ENCODE measurements at regions of chr20 and their contacts with region 1.

Region 1: GRCh38 chr20:14055127-14055742 is 59.9 kb downstream of the MACROD2 start:
- DNase-seq: peak; percentile 9 to 59 (median 14)
- ATAC-seq: no peak
- H3K4me3 ChIP-seq: no peak overlapping the region
- H3K27ac ChIP-seq: no peak overlapping the region
- H3K4me1 ChIP-seq: no peaks in the 10 kb centered on the region
- H3K27me3 ChIP-seq: no peaks in the 10 kb centered on the region
- CTCF ChIP-seq: peak; percentile 22 to 62 (median 32); a peak in 3 of 6 replicates
- EP300 ChIP-seq: no peak
- POLR2A ChIP-seq: no peak
- RAD21 ChIP-seq: peak; percentile 54 to 70

Region 2: GRCh38 chr20:13119583-13119982 is 935.7 kb before region 1 on chr20:
- CTCF ChIA-PET with region 1: interaction called, 4 read pairs
- POLR2A ChIA-PET with region 1: no interaction called
- in situ Hi-C with region 1: no loop called
- intact Hi-C with region 1: loop called (anchors 10 kb)
- DNase-seq: peak; percentile 13 to 44 (median 38)
- ATAC-seq: peak; percentile 86
- H3K4me3 ChIP-seq: no peak overlapping the region
- H3K27ac ChIP-seq: no peak overlapping the region
- H3K4me1 ChIP-seq: no peaks in the 10 kb centered on the region
- H3K27me3 ChIP-seq: no peaks in the 10 kb centered on the region
- CTCF ChIP-seq: peak; percentile 45 to 63 (median 54); a peak in 5 of 6 replicates
- EP300 ChIP-seq: no peak
- POLR2A ChIP-seq: no peak
- RAD21 ChIP-seq: peak; percentile 47 to 67

Region 3: DNA sequence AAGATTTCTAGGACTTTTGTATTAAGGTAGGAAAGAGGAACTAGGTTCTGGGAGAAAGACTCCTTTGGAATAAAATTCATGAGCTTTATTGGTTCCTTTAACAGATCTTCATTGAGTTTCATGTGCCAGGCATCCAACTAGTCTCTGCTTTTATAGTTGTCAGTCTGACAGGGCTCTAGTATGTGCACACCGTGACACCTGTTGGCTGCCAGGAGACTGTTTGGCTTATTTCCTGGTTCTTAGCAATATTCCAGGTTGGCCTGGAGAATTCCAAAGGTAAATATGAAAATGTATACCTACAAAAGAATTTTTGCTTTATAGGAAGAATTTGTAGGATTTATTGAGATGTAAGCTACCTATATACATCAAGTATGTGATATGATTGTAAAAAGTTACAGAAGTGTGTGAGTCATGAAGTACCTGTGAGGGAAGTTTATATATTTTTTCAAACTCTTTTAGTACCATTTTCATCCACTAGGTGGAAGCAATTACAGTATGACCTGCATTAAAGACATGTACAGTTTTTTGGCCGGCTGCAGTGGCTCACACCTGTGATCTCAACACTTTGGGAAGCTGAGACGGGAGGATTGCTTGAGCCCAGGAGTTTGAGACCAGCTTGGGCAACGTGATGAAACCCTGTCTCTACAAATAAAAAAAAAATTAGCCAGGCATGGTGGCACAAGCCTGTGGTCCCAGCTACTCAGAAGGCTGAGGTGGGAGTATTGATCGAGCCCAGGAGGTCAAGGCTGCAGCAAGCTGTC is 235.2 kb before region 1 on chr20:
- CTCF ChIA-PET with region 1: interaction called, 6 read pairs
- POLR2A ChIA-PET with region 1: no interaction called
- in situ Hi-C with region 1: no loop called
- intact Hi-C with region 1: loop called (anchors 1 kb)
- DNase-seq: peak; percentile 32 to 47 (median 36)
- ATAC-seq: peak; percentile 88
- H3K4me3 ChIP-seq: no peak overlapping the region
- H3K27ac ChIP-seq: no peak overlapping the region
- H3K4me1 ChIP-seq: no peaks in the 10 kb centered on the region; a peak in 1 of 5 replicates
- H3K27me3 ChIP-seq: no peaks in the 10 kb centered on the region; a peak in 1 of 5 replicates
- CTCF ChIP-seq: peak in 2 of 3 experiments; percentile 31 to 53; a peak in 4 of 6 replicates
- EP300 ChIP-seq: no peak
- POLR2A ChIP-seq: no peak
- RAD21 ChIP-seq: peak; percentile 29 to 51; a peak in 3 of 4 replicates

Region 4: GRCh38 chr20:13898011-13898612 is 157.1 kb before region 1 on chr20:
- CTCF ChIA-PET with region 1: interaction called, 4 read pairs
- POLR2A ChIA-PET with region 1: no interaction called
- in situ Hi-C with region 1: no loop called
- intact Hi-C with region 1: loop called (anchors 2 kb)
- DNase-seq: peak in 2 of 4 experiments; percentile 15 to 21
- ATAC-seq: peak; percentile 84
- H3K4me3 ChIP-seq: no peak overlapping the region
- H3K27ac ChIP-seq: no peak overlapping the region
- H3K4me1 ChIP-seq: no peaks in the 10 kb centered on the region; a peak in 1 of 5 replicates
- H3K27me3 ChIP-seq: no peaks in the 10 kb centered on the region
- CTCF ChIP-seq: peak; percentile 33 to 47 (median 42); a peak in 3 of 6 replicates
- EP300 ChIP-seq: no peak
- POLR2A ChIP-seq: no peak
- RAD21 ChIP-seq: peak; percentile 45 to 53

Region 5: GRCh38 chr20:14030991-14031390 is 24.2 kb before region 1 on chr20:
- CTCF ChIA-PET with region 1: no interaction called
- POLR2A ChIA-PET with region 1: no interaction called
- in situ Hi-C with region 1: no loop called
- intact Hi-C with region 1: no loop called
- DNase-seq: no peak
- ATAC-seq: no peak
- H3K4me3 ChIP-seq: no peak overlapping the region
- H3K27ac ChIP-seq: no peak overlapping the region
- H3K4me1 ChIP-seq: no peaks in the 10 kb centered on the region
- H3K27me3 ChIP-seq: no peaks in the 10 kb centered on the region
- CTCF ChIP-seq: no peak
- EP300 ChIP-seq: no peak
- POLR2A ChIP-seq: no peak
- RAD21 ChIP-seq: no peak

Region 6: GRCh38 chr20:14374196-14374595 is 319.0 kb after region 1 on chr20:
- CTCF ChIA-PET with region 1: no interaction called
- POLR2A ChIA-PET with region 1: no interaction called
- in situ Hi-C with region 1: no loop called
- intact Hi-C with region 1: no loop called
- DNase-seq: no peak
- ATAC-seq: no peak
- H3K4me3 ChIP-seq: no peak overlapping the region
- H3K27ac ChIP-seq: no peak overlapping the region
- H3K4me1 ChIP-seq: no peaks in the 10 kb centered on the region
- H3K27me3 ChIP-seq: no peaks in the 10 kb centered on the region
- CTCF ChIP-seq: no peak
- EP300 ChIP-seq: no peak
- POLR2A ChIP-seq: no peak
- RAD21 ChIP-seq: no peak